Mammary epithelial cell (primary cell): ENCODE measurements at regions of chr3 and their contacts with region 1.

Region 1: DNA sequence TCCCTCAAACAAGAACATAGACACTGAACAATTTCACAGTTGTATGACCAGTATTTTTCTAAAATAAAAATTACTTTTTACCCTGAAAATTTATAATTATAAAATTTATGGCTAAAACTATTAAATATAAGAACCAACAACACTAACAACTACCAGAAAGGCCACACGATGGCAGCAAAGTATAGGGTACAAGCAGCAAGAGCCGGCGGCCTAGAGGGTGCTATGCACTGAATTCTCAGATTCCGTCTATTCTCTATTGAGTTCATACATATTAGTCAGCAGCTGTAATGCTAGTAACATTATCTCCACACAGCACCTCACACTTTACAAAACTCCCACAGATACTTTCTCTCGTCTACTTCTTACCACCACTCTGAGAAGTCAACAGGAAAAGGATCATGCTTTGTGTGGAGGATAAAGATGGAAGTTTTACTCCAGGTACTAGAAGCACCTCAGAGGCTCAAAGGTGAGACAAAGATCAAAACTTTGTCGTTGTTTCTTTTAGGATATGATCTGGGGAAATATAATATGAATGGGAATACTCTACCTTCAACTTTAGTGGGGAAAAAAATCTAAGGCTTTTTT is 160.5 kb downstream of the FGF12 start:
- DNase-seq: peak; percentile 50
- H3K4me3 ChIP-seq: no peak overlapping the region
- H3K27ac ChIP-seq: no peak overlapping the region
- H3K4me1 ChIP-seq: no peaks in the 10 kb centered on the region
- H3K27me3 ChIP-seq: no peaks in the 10 kb centered on the region
- CTCF ChIP-seq: peak; percentile 51 to 72

Region 2: GRCh38 chr3:192382861-192383260 is 183.9 kb before region 1 on chr3:
- CTCF ChIA-PET with region 1: no interaction called
- dilution Hi-C with region 1: no loop called
- in situ Hi-C with region 1: no loop called
- intact Hi-C with region 1: no loop called
- DNase-seq: no peak
- H3K4me3 ChIP-seq: no peak overlapping the region
- H3K27ac ChIP-seq: no peak overlapping the region
- H3K4me1 ChIP-seq: no peaks in the 10 kb centered on the region
- H3K27me3 ChIP-seq: no peaks in the 10 kb centered on the region
- CTCF ChIP-seq: no peak

Region 3: GRCh38 chr3:192467230-192468140 is 99.3 kb before region 1 on chr3:
- CTCF ChIA-PET with region 1: no interaction called
- dilution Hi-C with region 1: no loop called
- in situ Hi-C with region 1: no loop called
- intact Hi-C with region 1: loop called (anchors 1 kb)
- DNase-seq: peak; percentile 47
- H3K4me3 ChIP-seq: no peak overlapping the region
- H3K27ac ChIP-seq: no peak overlapping the region
- H3K4me1 ChIP-seq: no peaks in the 10 kb centered on the region
- H3K27me3 ChIP-seq: no peaks in the 10 kb centered on the region
- CTCF ChIP-seq: peak; percentile 91 to 93

Region 4: DNA sequence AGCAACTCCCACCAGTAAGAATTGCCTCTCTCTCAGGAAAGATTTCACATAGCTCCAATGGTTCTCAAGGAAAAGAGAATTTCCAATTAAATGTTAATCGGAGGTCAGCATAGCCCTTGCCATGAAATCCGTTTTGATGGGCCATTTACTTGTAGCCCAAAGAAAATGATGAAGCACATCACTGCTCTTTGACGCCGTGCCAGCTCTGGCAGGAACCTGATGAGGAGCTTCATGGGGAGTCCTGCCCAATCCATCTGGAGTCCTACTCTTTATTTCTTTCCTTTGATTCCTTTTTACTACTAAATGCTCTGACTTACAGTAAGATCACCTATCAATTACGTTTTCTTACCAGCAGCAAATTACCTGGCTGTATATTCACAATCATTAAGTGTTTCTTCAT is 75.9 kb after region 1 on chr3:
- CTCF ChIA-PET with region 1: no interaction called
- dilution Hi-C with region 1: no loop called
- in situ Hi-C with region 1: no loop called
- intact Hi-C with region 1: no loop called
- DNase-seq: no peak
- H3K4me3 ChIP-seq: no peak overlapping the region
- H3K27ac ChIP-seq: no peak overlapping the region
- H3K4me1 ChIP-seq: no peaks in the 10 kb centered on the region
- H3K27me3 ChIP-seq: no peaks in the 10 kb centered on the region
- CTCF ChIP-seq: no peak

Region 5: GRCh38 chr3:192772240-192772894 is 205.6 kb after region 1 on chr3:
- CTCF ChIA-PET with region 1: no interaction called
- dilution Hi-C with region 1: no loop called
- in situ Hi-C with region 1: no loop called
- intact Hi-C with region 1: loop called (anchors 1 kb)
- DNase-seq: peak; percentile 27
- H3K4me3 ChIP-seq: no peak overlapping the region
- H3K27ac ChIP-seq: no peak overlapping the region
- H3K4me1 ChIP-seq: no peaks in the 10 kb centered on the region
- H3K27me3 ChIP-seq: no peaks in the 10 kb centered on the region
- CTCF ChIP-seq: peak; percentile 66 to 72

Region 6: GRCh38 chr3:192802957-192803899 is 236.4 kb after region 1 on chr3:
- CTCF ChIA-PET with region 1: no interaction called
- dilution Hi-C with region 1: no loop called
- in situ Hi-C with region 1: loop called (anchors 10 kb)
- intact Hi-C with region 1: loop called (anchors 1 kb)
- DNase-seq: no peak
- H3K4me3 ChIP-seq: no peak overlapping the region
- H3K27ac ChIP-seq: no peak overlapping the region
- H3K4me1 ChIP-seq: no peaks in the 10 kb centered on the region
- H3K27me3 ChIP-seq: no peaks in the 10 kb centered on the region
- CTCF ChIP-seq: peak; percentile 44 to 65

Region 7: GRCh38 chr3:193040836-193041672 is 474.3 kb after region 1 on chr3:
- CTCF ChIA-PET with region 1: no interaction called
- dilution Hi-C with region 1: no loop called
- in situ Hi-C with region 1: no loop called
- intact Hi-C with region 1: loop called (anchors 5 kb)
- DNase-seq: peak; percentile 56
- H3K4me3 ChIP-seq: no peak overlapping the region
- H3K27ac ChIP-seq: no peak overlapping the region
- H3K4me1 ChIP-seq: no peaks in the 10 kb centered on the region
- H3K27me3 ChIP-seq: no peaks in the 10 kb centered on the region
- CTCF ChIP-seq: peak; percentile 41 to 61

Region 8: DNA sequence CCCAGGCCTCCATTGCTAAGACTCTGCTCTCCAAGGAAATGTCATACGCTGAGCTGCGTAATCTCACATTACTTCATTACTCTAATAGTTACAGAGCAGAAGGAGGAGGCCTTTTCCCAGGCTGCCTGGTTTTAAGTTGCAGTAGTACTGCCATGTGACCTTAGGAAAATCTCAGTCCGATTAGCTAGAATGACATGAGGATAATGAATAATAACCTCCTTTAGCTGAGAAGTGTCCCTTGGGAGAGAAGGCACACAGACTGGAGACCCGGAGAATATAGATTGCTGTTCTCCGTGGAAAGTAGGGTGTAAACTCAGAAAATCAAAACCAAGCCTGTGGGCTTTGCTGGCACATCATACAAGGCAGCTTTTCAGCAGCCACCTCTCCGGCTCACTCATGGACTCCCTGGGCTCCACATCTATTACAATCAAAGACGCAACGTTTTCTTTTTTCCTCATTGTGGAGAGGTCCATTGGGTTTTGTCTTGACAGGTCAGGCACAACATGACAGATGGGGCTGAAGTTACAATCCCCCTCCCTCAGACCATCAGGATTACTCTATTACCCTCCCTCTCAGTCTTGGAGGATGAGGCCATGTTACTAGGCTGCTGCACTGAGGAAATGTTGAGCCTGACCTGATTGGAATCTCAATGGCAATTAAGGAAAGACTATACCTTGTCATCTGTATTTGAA is 485.7 kb after region 1 on chr3:
- CTCF ChIA-PET with region 1: no interaction called
- dilution Hi-C with region 1: no loop called
- in situ Hi-C with region 1: loop called in 1 of 2 experiments (anchors 25 kb)
- intact Hi-C with region 1: no loop called
- DNase-seq: no peak
- H3K4me3 ChIP-seq: no peak overlapping the region
- H3K27ac ChIP-seq: no peak overlapping the region
- H3K4me1 ChIP-seq: no peaks in the 10 kb centered on the region
- H3K27me3 ChIP-seq: no peaks in the 10 kb centered on the region
- CTCF ChIP-seq: no peak

Region 9: DNA sequence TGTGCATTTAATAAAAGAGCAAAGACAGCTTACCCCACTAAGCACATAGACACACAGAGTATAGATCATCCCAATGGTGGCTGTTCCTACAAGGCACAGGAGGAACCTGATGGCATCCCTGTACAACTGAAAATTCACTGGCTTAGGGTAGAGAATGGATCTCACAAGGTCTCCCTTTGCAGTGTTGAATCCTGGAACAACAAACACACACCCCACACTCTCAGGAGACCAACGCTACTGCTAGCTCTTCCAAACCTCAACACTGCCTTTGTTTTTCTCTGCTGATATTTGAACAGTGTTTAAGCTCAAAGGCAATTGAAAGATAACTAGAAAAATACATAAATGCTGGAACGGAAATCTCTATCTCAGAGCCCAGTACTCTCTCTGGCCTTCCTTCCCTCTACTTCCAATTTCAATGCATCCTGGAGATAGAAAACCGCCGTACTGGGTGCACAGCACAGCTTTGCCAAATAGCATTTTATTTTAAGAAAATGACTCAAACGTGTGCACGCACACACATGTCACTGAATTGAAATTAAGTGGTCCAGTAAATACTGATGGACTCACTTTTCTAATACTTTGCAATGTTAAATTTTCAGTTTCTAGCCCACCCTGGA is 899.3 kb after region 1 on chr3:
- CTCF ChIA-PET with region 1: no interaction called
- dilution Hi-C with region 1: no loop called
- in situ Hi-C with region 1: no loop called
- intact Hi-C with region 1: loop called (anchors 5 kb)
- DNase-seq: no peak
- H3K4me3 ChIP-seq: no peak overlapping the region
- H3K27ac ChIP-seq: no peak overlapping the region
- H3K4me1 ChIP-seq: no peaks in the 10 kb centered on the region
- H3K27me3 ChIP-seq: peaks cover 4% of the 10 kb centered on the region
- CTCF ChIP-seq: no peak